Esophagus muscularis mucosa (tissue), 4 donors: ENCODE measurements at regions of chr9 and their contacts with region 1.

Region 1: GRCh38 chr9:115591584-115591984 is 473.6 kb upstream of the TNC start:
- DNase-seq: no peak
- H3K4me3 ChIP-seq: no peak overlapping the region
- H3K27ac ChIP-seq: peak overlapping the region in 2 of 4 donors; percentile 31 to 48
- H3K4me1 ChIP-seq: peaks cover 0 to 7% (median 3%) of the 10 kb centered on the region in 4 donors
- H3K27me3 ChIP-seq: peaks cover 0 to 7% (median 0%) of the 10 kb centered on the region in 4 donors
- CTCF ChIP-seq: peak; percentile 58 to 73 (median 61)
- EP300 ChIP-seq: no peak
- POLR2A ChIP-seq: no peak

Region 2: GRCh38 chr9:115442054-115442453 is 149.5 kb before region 1 on chr9:
- intact Hi-C with region 1: no loop called
- DNase-seq: no peak
- H3K4me3 ChIP-seq: no peak overlapping the region
- H3K27ac ChIP-seq: peak overlapping the region in 1 of 4 donors; percentile 22
- H3K4me1 ChIP-seq: peaks cover 0 to 26% (median 14%) of the 10 kb centered on the region in 4 donors
- H3K27me3 ChIP-seq: no peaks in the 10 kb centered on the region
- CTCF ChIP-seq: no peak
- EP300 ChIP-seq: no peak
- POLR2A ChIP-seq: no peak

Region 3: GRCh38 chr9:115524453-115525059 is 67.0 kb before region 1 on chr9:
- intact Hi-C with region 1: no loop called
- DNase-seq: no peak
- H3K4me3 ChIP-seq: no peak overlapping the region
- H3K27ac ChIP-seq: no peak overlapping the region
- H3K4me1 ChIP-seq: peaks cover 0 to 28% (median 16%) of the 10 kb centered on the region in 4 donors
- H3K27me3 ChIP-seq: no peaks in the 10 kb centered on the region
- CTCF ChIP-seq: peak; percentile 74 to 81 (median 77)
- EP300 ChIP-seq: no peak
- POLR2A ChIP-seq: no peak

Region 4: DNA sequence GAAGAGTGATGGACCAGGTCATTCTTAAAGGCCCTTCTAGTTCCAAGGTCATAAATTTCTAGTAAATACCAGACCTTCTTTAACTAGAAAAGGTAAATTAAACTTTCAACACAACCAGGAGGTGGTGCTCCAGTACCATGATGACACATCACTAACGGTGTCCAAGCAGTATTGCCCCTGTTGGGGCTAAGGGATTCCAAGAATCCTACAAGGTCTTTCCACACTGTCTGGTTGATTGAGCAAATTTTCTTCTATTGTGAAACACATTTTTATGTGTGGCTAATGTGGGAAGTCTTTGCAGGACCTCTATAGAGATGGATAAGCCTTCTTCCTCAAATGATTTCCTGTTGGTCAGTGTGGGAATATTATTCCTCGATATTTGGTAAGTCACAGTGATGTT is 102.4 kb after region 1 on chr9:
- intact Hi-C with region 1: no loop called
- DNase-seq: no peak
- H3K4me3 ChIP-seq: no peak overlapping the region
- H3K27ac ChIP-seq: no peak overlapping the region
- H3K4me1 ChIP-seq: no peaks in the 10 kb centered on the region
- H3K27me3 ChIP-seq: no peaks in the 10 kb centered on the region
- CTCF ChIP-seq: no peak
- EP300 ChIP-seq: no peak
- POLR2A ChIP-seq: no peak

Region 5: DNA sequence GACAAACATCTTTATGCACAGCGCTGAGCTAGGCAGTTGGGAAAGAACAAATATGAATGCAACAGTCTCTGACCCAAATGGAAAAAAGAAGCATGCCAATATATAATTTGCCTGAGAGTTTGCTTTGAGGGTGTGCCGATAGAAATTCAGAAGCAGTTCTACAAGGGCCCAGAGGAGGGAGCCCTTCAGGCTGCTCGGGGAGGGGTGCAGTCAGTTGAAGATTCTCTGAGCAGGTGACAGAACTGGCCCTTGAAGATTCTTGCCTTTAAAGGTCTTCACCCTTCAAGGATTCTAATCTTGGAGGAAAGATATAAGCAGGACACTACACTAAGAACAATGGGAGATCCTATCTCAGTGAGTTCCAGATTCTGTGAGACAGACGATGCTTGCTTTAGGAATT is 558.3 kb after region 1 on chr9:
- intact Hi-C with region 1: loop called (anchors 5 kb)
- DNase-seq: no peak
- H3K4me3 ChIP-seq: no peak overlapping the region
- H3K27ac ChIP-seq: no peak overlapping the region
- H3K4me1 ChIP-seq: peaks cover 0 to 17% (median 15%) of the 10 kb centered on the region in 4 donors
- H3K27me3 ChIP-seq: peaks cover 0 to 80% (median 7%) of the 10 kb centered on the region in 4 donors
- CTCF ChIP-seq: peak in 2 of 3 experiments; percentile 32 to 43
- EP300 ChIP-seq: no peak
- POLR2A ChIP-seq: no peak

Region 6: DNA sequence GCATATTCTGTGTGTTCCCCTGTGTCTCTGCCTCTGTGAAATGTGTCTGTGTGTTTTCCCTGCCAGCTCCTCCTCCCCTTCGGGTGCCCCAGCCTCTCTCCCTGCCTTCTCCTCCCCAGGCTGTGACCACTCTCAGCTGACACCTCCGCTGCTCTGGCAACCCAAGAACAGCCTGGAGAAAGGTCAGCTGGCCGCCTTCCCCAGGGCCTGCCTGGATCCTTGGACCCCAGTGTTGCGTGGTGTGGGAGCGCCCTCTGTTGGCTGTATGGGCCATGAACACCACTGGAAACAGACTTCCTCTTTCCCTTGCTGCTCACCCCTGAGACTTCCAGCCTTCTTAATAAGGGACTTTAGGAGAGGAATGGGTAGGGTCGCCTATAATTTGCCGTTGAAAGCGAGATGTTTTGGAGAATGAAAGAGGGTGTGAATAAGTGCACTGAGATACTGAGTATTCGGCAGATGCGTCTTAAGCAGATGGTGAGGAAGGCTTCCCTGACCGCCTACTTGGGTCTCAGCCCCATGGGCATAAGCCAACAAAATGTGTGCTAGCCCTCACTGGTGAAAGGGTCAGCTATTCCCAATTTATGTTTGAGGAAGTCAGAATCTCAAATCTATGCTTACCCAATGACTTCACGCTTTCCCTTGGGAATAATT is 980.6 kb after region 1 on chr9:
- intact Hi-C with region 1: loop called (anchors 2 kb)
- DNase-seq: peak; percentile 96
- H3K4me3 ChIP-seq: no peak overlapping the region
- H3K27ac ChIP-seq: no peak overlapping the region
- H3K4me1 ChIP-seq: peaks cover 9 to 20% (median 15%) of the 10 kb centered on the region in 4 donors
- H3K27me3 ChIP-seq: no peaks in the 10 kb centered on the region
- CTCF ChIP-seq: peak; percentile 71 to 80 (median 75)
- EP300 ChIP-seq: no peak
- POLR2A ChIP-seq: no peak

Region 7: GRCh38 chr9:116661037-116661954 is 1069.7 kb after region 1 on chr9:
- intact Hi-C with region 1: loop called (anchors 5 kb)
- DNase-seq: no peak
- H3K4me3 ChIP-seq: no peak overlapping the region
- H3K27ac ChIP-seq: no peak overlapping the region
- H3K4me1 ChIP-seq: peaks cover 6 to 19% (median 10%) of the 10 kb centered on the region in 4 donors
- H3K27me3 ChIP-seq: no peaks in the 10 kb centered on the region
- CTCF ChIP-seq: peak; percentile 66 to 72 (median 66)
- EP300 ChIP-seq: no peak
- POLR2A ChIP-seq: no peak